Thyroid gland (tissue), 4 donors: ENCODE measurements at regions of chr9 and their contacts with region 1.

Region 1: GRCh38 chr9:127178686-127179632 is 56.5 kb upstream of the ANGPTL2 start:
- DNase-seq: peak in 1 of 2 donors; percentile 33
- H3K4me3 ChIP-seq: no peak overlapping the region
- H3K27ac ChIP-seq: peak overlapping the region in 2 of 3 donors; percentile 5 to 53
- H3K4me1 ChIP-seq: peaks cover 4 to 25% of the 10 kb centered on the region in 2 donors
- H3K27me3 ChIP-seq: no peaks in the 10 kb centered on the region
- CTCF ChIP-seq: no peak
- POLR2A ChIP-seq: no peak

Region 2: GRCh38 chr9:127122176-127123063 is 56.5 kb before region 1 on chr9 and contains the start of gene ANGPTL2:
- intact Hi-C with region 1: loop called (anchors 5 kb)
- DNase-seq: peak; percentile 89 to 93
- H3K4me3 ChIP-seq: peak within 1 kb of the TSS in 2 of 3 donors; percentile 6 to 31
- H3K27ac ChIP-seq: peak within 1 kb of the TSS; percentile 40 to 89 (median 81)
- H3K4me1 ChIP-seq: peaks cover 17 to 45% of the 10 kb centered on the region in 2 donors
- H3K27me3 ChIP-seq: no peaks in the 10 kb centered on the region
- CTCF ChIP-seq: no peak
- POLR2A ChIP-seq: peak in 1 of 2 donors; percentile 50
- total RNA-seq, gene ANGPTL2: 5.9 to 12.6 (median 8.7) TPM